Activated naive CD4-positive, alpha-beta T cell treated with anti-CD3 and anti-CD28 coated beads for 36 hours (primary cell): ENCODE measurements at regions of chr14 and their contacts with region 1.

Region 1: GRCh38 chr14:106228541-106229158 is 702.3 kb downstream of the TMEM121 start:
- DNase-seq: peak; percentile 78
- H3K4me3 Mint-ChIP-seq: peak overlapping the region; percentile 73
- H3K27ac Mint-ChIP-seq: peak overlapping the region; percentile 91
- H3K4me1 Mint-ChIP-seq: peaks cover 68% of the 10 kb centered on the region
- H3K27me3 Mint-ChIP-seq: no peaks in the 10 kb centered on the region

Region 2: DNA sequence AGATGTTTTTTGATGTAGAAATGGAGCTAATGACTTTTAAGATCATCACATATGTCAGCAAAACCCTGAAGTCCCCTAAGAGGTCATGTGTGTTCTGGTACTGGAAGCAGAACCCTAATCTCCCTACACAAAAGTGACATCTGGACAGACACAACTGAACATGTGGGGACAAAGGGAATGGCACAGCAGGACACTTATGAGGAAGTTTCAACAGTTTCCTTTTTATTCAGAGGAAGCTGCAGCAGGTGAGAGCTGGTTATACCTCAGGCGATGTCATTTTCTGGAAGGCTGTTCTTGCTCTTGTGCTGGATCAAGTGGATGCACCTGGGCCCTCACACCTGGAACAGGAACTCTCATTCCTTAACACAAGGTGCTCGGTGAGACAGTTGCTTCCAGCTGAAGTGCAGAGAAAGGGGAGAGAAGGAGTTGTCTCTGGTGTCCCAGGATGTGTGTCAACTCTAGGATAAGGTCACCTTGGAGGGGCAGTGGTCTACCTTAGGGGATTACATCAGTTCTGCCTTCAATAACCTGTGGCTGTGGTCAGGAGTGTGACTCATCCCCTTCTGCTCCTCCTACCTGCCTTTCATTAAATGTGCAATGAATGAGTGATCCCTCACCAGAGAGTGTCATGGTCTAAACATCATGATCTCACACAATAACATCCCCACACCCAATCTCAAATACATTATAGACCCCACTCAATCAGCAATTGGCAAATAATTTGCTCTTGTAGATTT is 238.9 kb before region 1 on chr14:
- CTCF ChIA-PET with region 1: no interaction called
- intact Hi-C with region 1: no loop called
- DNase-seq: peak; percentile 74
- H3K4me3 Mint-ChIP-seq: no peak overlapping the region
- H3K27ac Mint-ChIP-seq: peak overlapping the region; percentile 21
- H3K4me1 Mint-ChIP-seq: peaks cover 47% of the 10 kb centered on the region
- H3K27me3 Mint-ChIP-seq: no peaks in the 10 kb centered on the region

Region 3: GRCh38 chr14:106120101-106120500 is 108.5 kb before region 1 on chr14:
- CTCF ChIA-PET with region 1: no interaction called
- intact Hi-C with region 1: no loop called
- DNase-seq: no peak
- H3K4me3 Mint-ChIP-seq: peak overlapping the region; percentile 63
- H3K27ac Mint-ChIP-seq: no peak overlapping the region
- H3K4me1 Mint-ChIP-seq: peaks cover 37% of the 10 kb centered on the region
- H3K27me3 Mint-ChIP-seq: peaks cover 7% of the 10 kb centered on the region

Region 4: GRCh38 chr14:106174206-106174605 is 54.4 kb before region 1 on chr14:
- CTCF ChIA-PET with region 1: interaction called, 9 read pairs
- intact Hi-C with region 1: loop called (anchors 2 kb)
- DNase-seq: peak; percentile 78
- H3K4me3 Mint-ChIP-seq: peak overlapping the region; percentile 25
- H3K27ac Mint-ChIP-seq: no peak overlapping the region
- H3K4me1 Mint-ChIP-seq: peaks cover 54% of the 10 kb centered on the region
- H3K27me3 Mint-ChIP-seq: no peaks in the 10 kb centered on the region

Region 5: GRCh38 chr14:106200541-106201315 is 27.9 kb before region 1 on chr14:
- CTCF ChIA-PET with region 1: interaction called, 13 read pairs
- intact Hi-C with region 1: no loop called
- DNase-seq: peak; percentile 65
- H3K4me3 Mint-ChIP-seq: peak overlapping the region; percentile 71
- H3K27ac Mint-ChIP-seq: no peak overlapping the region
- H3K4me1 Mint-ChIP-seq: peaks cover 19% of the 10 kb centered on the region
- H3K27me3 Mint-ChIP-seq: peaks cover 22% of the 10 kb centered on the region

Region 6: GRCh38 chr14:106308839-106309389 is 80.3 kb after region 1 on chr14:
- CTCF ChIA-PET with region 1: interaction called, 14 read pairs
- intact Hi-C with region 1: no loop called
- DNase-seq: peak; percentile 97
- H3K4me3 Mint-ChIP-seq: no peak overlapping the region
- H3K27ac Mint-ChIP-seq: no peak overlapping the region
- H3K4me1 Mint-ChIP-seq: no peaks in the 10 kb centered on the region
- H3K27me3 Mint-ChIP-seq: no peaks in the 10 kb centered on the region

Region 7: DNA sequence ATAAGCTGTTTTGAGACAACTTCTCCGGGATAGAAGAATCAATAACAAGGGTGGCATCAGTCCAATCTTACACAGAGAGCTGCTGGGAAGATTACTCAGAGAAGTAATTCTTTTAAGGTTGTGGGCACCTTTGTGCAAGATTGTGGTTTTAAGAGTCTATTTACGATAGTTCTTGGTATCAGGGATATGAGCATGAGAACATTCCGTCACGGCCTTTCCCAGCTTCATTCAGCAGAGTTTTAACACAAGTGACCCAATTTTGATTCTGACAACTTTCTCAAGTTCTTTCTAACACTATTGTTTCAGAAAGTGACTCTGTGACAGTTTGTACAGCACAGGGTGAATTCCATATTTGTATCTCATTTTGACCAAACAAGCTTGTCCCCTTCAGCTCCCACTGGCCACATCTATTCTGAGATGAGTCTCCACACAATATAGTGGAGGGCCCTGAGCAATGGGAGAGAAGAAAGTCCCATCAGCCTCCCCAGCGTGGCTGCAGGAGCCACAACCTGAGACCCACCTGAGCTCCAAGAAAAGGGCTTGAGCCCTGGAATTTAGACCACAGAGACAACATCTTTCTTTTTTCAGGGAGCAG is 166.9 kb after region 1 on chr14:
- CTCF ChIA-PET with region 1: no interaction called
- intact Hi-C with region 1: loop called (anchors 2 kb)
- DNase-seq: peak; percentile 74
- H3K4me3 Mint-ChIP-seq: peak overlapping the region; percentile 63
- H3K27ac Mint-ChIP-seq: peak overlapping the region; percentile 92
- H3K4me1 Mint-ChIP-seq: peaks cover 39% of the 10 kb centered on the region
- H3K27me3 Mint-ChIP-seq: peaks cover 8% of the 10 kb centered on the region